Keratinocyte (primary cell): ENCODE measurements at regions of chr5 and their contacts with region 1.

Region 1: GRCh38 chr5:109223531-109223930 is 186.2 kb downstream of the PJA2 start:
- DNase-seq: no peak
- H3K4me3 ChIP-seq: no peak overlapping the region
- H3K27ac ChIP-seq: no peak overlapping the region
- H3K4me1 ChIP-seq: no peaks in the 10 kb centered on the region
- H3K27me3 ChIP-seq: peaks cover 4% of the 10 kb centered on the region
- CTCF ChIP-seq: no peak

Region 2: GRCh38 chr5:109316634-109317033 is 93.1 kb after region 1 on chr5:
- dilution Hi-C with region 1: loop called (anchors 25 kb)
- DNase-seq: no peak
- H3K4me3 ChIP-seq: no peak overlapping the region
- H3K27ac ChIP-seq: no peak overlapping the region
- H3K4me1 ChIP-seq: peaks cover 4% of the 10 kb centered on the region
- H3K27me3 ChIP-seq: no peaks in the 10 kb centered on the region
- CTCF ChIP-seq: no peak